ENCODE measurements at regions of chr12 and their contacts with region 1.

Region 1: GRCh38 chr12:89225808-89226411 is 126.4 kb downstream of the DUSP6 start:
- DNase-seq: peak; percentile 75
- H3K4me3 Mint-ChIP-seq: peak overlapping the region; percentile 58
- H3K27ac Mint-ChIP-seq: peak overlapping the region; percentile 95
- H3K4me1 Mint-ChIP-seq: peaks cover 67% of the 10 kb centered on the region
- H3K27me3 Mint-ChIP-seq: no peaks in the 10 kb centered on the region

Region 2: DNA sequence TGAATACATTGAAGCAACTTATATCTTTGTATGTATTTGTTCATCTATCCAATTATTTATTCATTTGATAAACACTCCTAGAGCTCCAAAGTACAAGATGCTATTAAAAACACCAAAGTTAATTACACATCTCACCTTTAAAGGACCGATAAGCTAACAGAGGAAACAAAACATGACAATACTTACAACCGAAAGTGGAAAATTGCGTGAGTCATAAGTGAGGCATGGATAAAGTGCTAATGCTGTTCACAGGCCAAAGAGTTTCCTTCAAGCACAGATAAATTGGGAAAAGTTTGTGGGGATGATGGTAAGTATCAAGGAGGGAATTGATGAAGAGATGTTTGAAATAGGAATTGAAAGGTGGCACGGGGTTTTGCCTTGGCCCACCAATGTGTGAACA is 472.8 kb before region 1 on chr12:
- intact Hi-C with region 1: no loop called
- DNase-seq: no peak
- H3K4me3 Mint-ChIP-seq: no peak overlapping the region
- H3K27ac Mint-ChIP-seq: no peak overlapping the region
- H3K4me1 Mint-ChIP-seq: no peaks in the 10 kb centered on the region
- H3K27me3 Mint-ChIP-seq: no peaks in the 10 kb centered on the region

Region 3: DNA sequence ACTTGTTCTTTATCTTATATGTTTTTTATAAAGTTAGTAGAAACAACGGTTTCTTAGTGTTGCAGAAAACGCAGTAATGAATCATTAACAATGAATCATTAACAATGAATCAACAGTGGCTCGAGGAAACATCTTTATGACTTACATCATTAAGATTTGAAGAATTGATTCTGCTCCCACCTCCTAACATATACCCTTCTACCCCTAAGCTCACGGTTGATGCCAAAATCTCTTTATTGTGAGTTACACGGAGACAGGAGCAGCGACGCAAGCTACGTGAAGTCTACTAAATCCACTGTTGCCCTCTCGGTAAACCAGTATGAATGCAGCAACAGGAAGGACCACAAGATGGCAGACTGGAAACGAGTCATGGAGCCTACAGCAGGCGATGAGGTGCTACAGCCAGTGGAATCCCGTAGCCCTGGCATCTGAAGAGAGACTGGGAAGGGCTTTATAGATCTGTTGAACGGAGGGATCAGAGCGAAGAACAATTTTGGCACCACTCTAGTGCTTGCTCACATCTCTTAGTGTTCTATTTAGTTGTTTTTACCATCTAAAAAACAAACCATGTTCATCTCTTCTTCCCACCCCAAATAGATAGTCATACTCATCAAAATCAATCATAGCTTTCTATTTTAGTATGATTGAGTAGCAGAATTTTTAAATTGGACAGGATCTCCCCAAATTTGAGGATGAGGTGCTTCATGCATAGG is 206.3 kb before region 1 on chr12:
- intact Hi-C with region 1: loop called (anchors 1 kb)
- DNase-seq: peak; percentile 94
- H3K4me3 Mint-ChIP-seq: no peak overlapping the region
- H3K27ac Mint-ChIP-seq: no peak overlapping the region
- H3K4me1 Mint-ChIP-seq: peaks cover 18% of the 10 kb centered on the region
- H3K27me3 Mint-ChIP-seq: peaks cover 5% of the 10 kb centered on the region

Region 4: GRCh38 chr12:89162704-89163261 is 63.1 kb before region 1 on chr12:
- intact Hi-C with region 1: loop called (anchors 1 kb)
- DNase-seq: peak; percentile 86
- H3K4me3 Mint-ChIP-seq: no peak overlapping the region
- H3K27ac Mint-ChIP-seq: no peak overlapping the region
- H3K4me1 Mint-ChIP-seq: peaks cover 17% of the 10 kb centered on the region
- H3K27me3 Mint-ChIP-seq: no peaks in the 10 kb centered on the region

Region 5: GRCh38 chr12:89261982-89262381 is 36.1 kb after region 1 on chr12:
- intact Hi-C with region 1: loop called (anchors 1 kb)
- DNase-seq: no peak
- H3K4me3 Mint-ChIP-seq: no peak overlapping the region
- H3K27ac Mint-ChIP-seq: no peak overlapping the region
- H3K4me1 Mint-ChIP-seq: peaks cover 25% of the 10 kb centered on the region
- H3K27me3 Mint-ChIP-seq: no peaks in the 10 kb centered on the region

Region 6: DNA sequence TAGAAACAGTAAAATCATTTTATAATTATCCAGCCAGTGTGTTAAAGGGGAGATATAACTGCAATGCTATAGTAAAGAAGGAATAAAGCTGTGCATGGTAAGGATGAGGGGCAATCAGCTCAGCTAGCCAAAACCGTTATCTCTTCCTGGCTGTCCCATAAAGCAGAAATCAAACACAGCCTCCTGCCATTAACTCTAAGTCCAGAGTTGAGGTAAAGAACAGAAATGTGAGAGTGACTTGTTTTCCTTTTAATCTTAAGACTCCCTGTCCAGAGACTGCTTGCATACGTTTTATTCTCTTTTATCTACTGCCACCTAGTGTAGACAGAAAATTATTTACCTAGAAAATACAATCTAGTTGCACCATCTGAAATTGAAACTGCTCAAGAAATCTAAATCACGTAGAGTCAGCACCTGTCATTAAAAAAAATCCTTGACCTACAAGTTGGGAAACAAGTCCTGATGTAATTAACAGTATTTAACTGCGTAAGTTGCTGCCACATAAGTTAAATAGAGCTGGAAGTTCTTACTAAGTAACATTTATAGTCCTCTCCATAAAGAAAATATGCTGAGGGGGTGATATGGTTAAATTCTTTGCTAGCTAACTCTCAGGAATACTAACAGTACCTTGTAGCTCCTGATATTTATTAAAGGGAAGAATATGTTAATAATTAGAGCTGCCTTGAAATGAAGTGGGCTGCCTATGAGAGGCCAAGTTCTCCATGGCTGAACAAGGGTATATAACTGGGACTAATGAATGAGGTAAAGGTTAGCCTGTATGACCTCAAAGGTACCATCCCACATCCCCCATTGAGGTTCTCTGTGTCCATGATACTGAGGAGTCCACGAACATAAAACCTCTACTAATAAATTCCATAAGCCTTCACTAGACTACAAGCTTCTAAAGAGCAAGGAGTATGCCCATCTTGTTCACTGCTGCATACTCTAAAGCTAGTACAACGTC is 236.0 kb after region 1 on chr12:
- intact Hi-C with region 1: loop called (anchors 2 kb)
- DNase-seq: peak; percentile 65
- H3K4me3 Mint-ChIP-seq: peak overlapping the region; percentile 77
- H3K27ac Mint-ChIP-seq: peak overlapping the region; percentile 64
- H3K4me1 Mint-ChIP-seq: peaks cover 39% of the 10 kb centered on the region
- H3K27me3 Mint-ChIP-seq: no peaks in the 10 kb centered on the region

Region 7: GRCh38 chr12:89756585-89757321 is 530.8 kb after region 1 on chr12:
- intact Hi-C with region 1: loop called (anchors 2 kb)
- DNase-seq: peak; percentile 78
- H3K4me3 Mint-ChIP-seq: peak overlapping the region; percentile 10
- H3K27ac Mint-ChIP-seq: peak overlapping the region; percentile 77
- H3K4me1 Mint-ChIP-seq: peaks cover 22% of the 10 kb centered on the region
- H3K27me3 Mint-ChIP-seq: peaks cover 2% of the 10 kb centered on the region

Measured in activated CD4-positive, alpha-beta T cell treated with anti-CD3 and anti-CD28 coated beads, Interleukin-2, amount 10 ng/mL, durations not matched to agents 24 days and 14 days (primary cell).